Gastrocnemius medialis (tissue), 4 donors: ENCODE measurements at regions of chr7 and their contacts with region 1.

Region 1: DNA sequence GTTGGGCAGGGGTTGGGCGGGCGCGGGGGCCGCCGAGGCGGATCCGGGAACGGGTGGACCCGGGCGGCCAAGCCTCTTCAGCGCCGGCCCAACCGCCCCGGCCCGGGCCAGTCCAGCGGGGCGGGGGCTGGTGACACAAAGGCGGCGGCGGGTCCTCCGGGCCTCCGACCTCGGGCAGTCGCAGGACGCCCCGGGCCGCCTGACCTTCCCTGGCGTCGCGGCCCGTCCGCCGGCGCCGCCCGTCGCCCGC is 54.2 kb downstream of the METTL2B start:
- DNase-seq: no peak
- ATAC-seq: no peak
- H3K4me3 ChIP-seq: peak overlapping the region; percentile 85 to 98 (median 86)
- H3K27ac ChIP-seq: peak overlapping the region; percentile 97 to 100 (median 98)
- H3K4me1 ChIP-seq: peaks cover 22 to 35% of the 10 kb centered on the region in 2 donors
- H3K27me3 ChIP-seq: no peaks in the 10 kb centered on the region
- CTCF ChIP-seq: no peak
- POLR2A ChIP-seq: no peak

Region 2: GRCh38 chr7:128455551-128456254 is 75.1 kb before region 1 on chr7 and contains the start of gene HILPDA:
- in situ Hi-C with region 1: no loop called
- intact Hi-C with region 1: loop called (anchors 10 kb)
- DNase-seq: peak; percentile 83 to 92
- ATAC-seq: peak; percentile 84 to 92
- H3K4me3 ChIP-seq: peak within 1 kb of the TSS; percentile 71 to 89 (median 84)
- H3K27ac ChIP-seq: peak within 1 kb of the TSS; percentile 83 to 92 (median 88)
- H3K4me1 ChIP-seq: peaks cover 20 to 22% of the 10 kb centered on the region in 2 donors
- H3K27me3 ChIP-seq: no peaks in the 10 kb centered on the region
- CTCF ChIP-seq: no peak
- POLR2A ChIP-seq: peak; percentile 66 to 80
- total RNA-seq, gene HILPDA: 1.1 to 4.3 (median 3.2) TPM

Region 3: GRCh38 chr7:128726059-128726736 is 195.4 kb after region 1 on chr7:
- in situ Hi-C with region 1: no loop called
- intact Hi-C with region 1: no loop called
- DNase-seq: no peak
- ATAC-seq: no peak
- H3K4me3 ChIP-seq: no peak overlapping the region
- H3K27ac ChIP-seq: no peak overlapping the region
- H3K4me1 ChIP-seq: no peaks in the 10 kb centered on the region
- H3K27me3 ChIP-seq: no peaks in the 10 kb centered on the region
- CTCF ChIP-seq: no peak
- POLR2A ChIP-seq: no peak

Region 4: GRCh38 chr7:128770233-128770632 is 239.5 kb after region 1 on chr7:
- in situ Hi-C with region 1: no loop called
- intact Hi-C with region 1: no loop called
- DNase-seq: no peak
- ATAC-seq: no peak
- H3K4me3 ChIP-seq: no peak overlapping the region
- H3K27ac ChIP-seq: no peak overlapping the region
- H3K4me1 ChIP-seq: peaks cover 4 to 21% of the 10 kb centered on the region in 2 donors
- H3K27me3 ChIP-seq: no peaks in the 10 kb centered on the region
- CTCF ChIP-seq: no peak
- POLR2A ChIP-seq: no peak

Region 5: GRCh38 chr7:129611246-129612111 is 1080.7 kb after region 1 on chr7 and contains the start of gene NRF1:
- in situ Hi-C with region 1: no loop called
- intact Hi-C with region 1: loop called (anchors 10 kb)
- DNase-seq: peak; percentile 82 to 89
- ATAC-seq: peak; percentile 88 to 89
- H3K4me3 ChIP-seq: peak within 1 kb of the TSS; percentile 75 to 91 (median 80)
- H3K27ac ChIP-seq: peak within 1 kb of the TSS; percentile 91 to 97 (median 94)
- H3K4me1 ChIP-seq: peaks cover 20 to 25% of the 10 kb centered on the region in 2 donors
- H3K27me3 ChIP-seq: no peaks in the 10 kb centered on the region
- CTCF ChIP-seq: peak in 2 of 5 experiments; percentile 29 to 43
- POLR2A ChIP-seq: peak; percentile 77 to 81
- total RNA-seq, gene NRF1: 11.3 to 26.3 (median 18.0) TPM